Ascending aorta (tissue), 2 donors: ENCODE measurements at regions of chr5 and their contacts with region 1.

Region 1: GRCh38 chr5:179763215-179763945 is 30.4 kb upstream of the LTC4S start:
- DNase-seq: peak in 1 of 2 donors; percentile 90
- H3K4me3 ChIP-seq: peak overlapping the region in 1 of 2 donors; percentile 16
- H3K27ac ChIP-seq: peak overlapping the region; percentile 74 to 91
- H3K4me1 ChIP-seq: peaks cover 22 to 52% of the 10 kb centered on the region in 2 donors
- H3K27me3 ChIP-seq: no peaks in the 10 kb centered on the region
- CTCF ChIP-seq: peak; percentile 76 to 91 (median 89)

Region 2: GRCh38 chr5:179438011-179438441 is 325.4 kb before region 1 on chr5:
- intact Hi-C with region 1: no loop called
- DNase-seq: no peak
- H3K4me3 ChIP-seq: no peak overlapping the region
- H3K27ac ChIP-seq: no peak overlapping the region
- H3K4me1 ChIP-seq: no peaks in the 10 kb centered on the region
- H3K27me3 ChIP-seq: no peaks in the 10 kb centered on the region
- CTCF ChIP-seq: no peak

Region 3: DNA sequence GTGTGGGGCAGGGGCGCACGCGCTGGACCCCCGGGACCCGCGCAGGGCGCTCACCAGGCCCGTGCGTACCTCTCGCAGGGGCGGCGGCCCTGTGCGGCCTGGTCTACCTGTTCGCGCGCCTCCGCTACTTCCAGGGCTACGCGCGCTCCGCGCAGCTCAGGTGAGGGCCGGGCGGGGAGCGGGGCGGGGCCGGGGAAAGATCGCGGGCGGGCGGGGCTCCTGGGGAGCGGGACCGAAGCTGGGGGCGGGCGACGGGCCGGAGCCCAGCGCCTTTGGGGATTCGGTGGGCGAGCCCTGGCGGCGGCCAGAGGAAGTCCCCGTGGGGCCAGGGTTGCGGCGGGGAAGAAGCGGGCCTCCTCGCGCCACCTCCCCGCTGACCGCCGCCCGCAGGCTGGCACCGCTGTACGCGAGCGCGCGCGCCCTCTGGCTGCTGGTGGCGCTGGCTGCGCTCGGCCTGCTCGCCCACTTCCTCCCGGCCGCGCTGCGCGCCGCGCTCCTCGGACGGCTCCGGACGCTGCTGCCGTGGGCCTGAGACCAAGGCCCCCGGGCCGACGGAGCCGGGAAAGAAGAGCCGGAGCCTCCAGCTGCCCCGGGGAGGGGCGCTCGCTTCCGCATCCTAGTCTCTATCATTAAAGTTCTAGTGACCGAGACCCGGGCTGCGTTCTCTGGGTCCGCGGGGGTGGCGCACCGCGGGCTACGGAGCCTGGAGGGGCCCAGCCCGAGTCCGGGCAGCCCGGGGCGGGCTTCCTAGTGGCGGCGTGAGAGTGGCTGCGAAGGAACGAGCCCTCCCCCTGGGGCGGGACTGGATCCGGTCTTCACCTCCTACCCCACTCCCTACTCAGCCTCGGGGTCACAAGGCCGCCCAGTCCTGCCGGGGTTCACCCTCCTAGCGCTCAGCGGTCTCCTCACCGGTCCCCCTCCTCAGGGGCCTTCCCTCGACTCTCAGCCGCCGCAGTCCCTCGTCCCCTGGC is 32.8 kb after region 1 on chr5:
- intact Hi-C with region 1: loop called (anchors 1 kb)
- DNase-seq: peak in 1 of 2 donors; percentile 89
- H3K4me3 ChIP-seq: peak overlapping the region; percentile 68 to 75
- H3K27ac ChIP-seq: peak overlapping the region; percentile 75 to 79
- H3K4me1 ChIP-seq: peaks cover 12 to 29% of the 10 kb centered on the region in 2 donors
- H3K27me3 ChIP-seq: no peaks in the 10 kb centered on the region
- CTCF ChIP-seq: peak; percentile 25 to 90 (median 71)

Region 4: DNA sequence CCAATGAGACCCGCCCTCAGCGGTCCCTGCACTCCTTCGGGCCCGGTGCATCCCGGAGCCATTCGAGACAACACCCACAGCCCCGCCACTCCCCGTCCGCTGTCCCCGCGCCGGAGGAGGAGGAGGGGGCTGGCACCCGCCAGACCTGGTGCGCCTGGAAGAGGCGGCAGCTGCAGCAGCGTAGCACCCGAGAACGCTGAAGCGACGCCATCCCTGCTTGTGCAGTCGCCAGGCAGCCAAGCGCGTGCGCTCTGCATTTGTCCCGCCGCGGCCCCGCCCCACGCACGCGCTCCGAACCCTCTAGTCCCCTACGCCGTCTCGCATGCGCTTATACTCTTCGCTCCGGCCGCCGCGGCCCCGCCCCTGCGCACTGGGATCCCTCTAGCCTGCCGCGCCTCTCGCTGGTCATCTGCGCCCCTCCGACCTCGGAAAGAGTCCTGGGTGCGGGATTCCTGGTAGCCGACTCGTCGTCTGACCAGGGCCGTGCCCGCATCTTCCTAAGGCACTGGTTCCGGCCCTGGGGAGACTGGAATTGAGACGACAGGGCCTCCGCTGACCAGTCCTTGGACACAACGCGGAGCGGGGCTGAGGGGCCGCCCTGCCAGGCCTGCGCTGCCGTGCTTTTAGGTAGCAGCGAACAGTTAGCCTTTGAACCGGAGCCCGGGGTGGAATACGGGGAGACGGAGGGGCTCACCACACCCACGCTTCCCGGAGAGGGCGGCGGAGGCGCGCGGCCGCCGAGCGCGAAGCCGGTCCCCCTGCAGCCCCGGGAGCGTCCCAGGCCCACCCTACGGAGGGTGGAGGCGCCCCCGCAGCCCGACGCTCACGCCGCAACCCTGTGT is 95.4 kb after region 1 on chr5 and contains the start of gene MRNIP:
- intact Hi-C with region 1: loop called (anchors 2 kb)
- DNase-seq: peak; percentile 83 to 98
- H3K4me3 ChIP-seq: peak within 1 kb of the TSS; percentile 79 to 93
- H3K27ac ChIP-seq: peak within 1 kb of the TSS; percentile 78 to 86
- H3K4me1 ChIP-seq: peaks cover 0 to 8% of the 10 kb centered on the region in 2 donors
- H3K27me3 ChIP-seq: no peaks in the 10 kb centered on the region
- CTCF ChIP-seq: peak in 1 of 3 experiments; percentile 33
- total RNA-seq, gene MRNIP: 17.3 TPM